ENCODE measurements at regions of chr16 and their contacts with region 1.

Region 1: GRCh38 chr16:82699711-82700495 is 73.1 kb downstream of the CDH13 start:
- DNase-seq: no peak
- H3K4me3 ChIP-seq: peak overlapping the region; percentile 19
- H3K27ac ChIP-seq: peak overlapping the region; percentile 88
- H3K4me1 ChIP-seq: peaks cover 71% of the 10 kb centered on the region
- H3K27me3 ChIP-seq: no peaks in the 10 kb centered on the region
- CTCF ChIP-seq: no peak

Region 2: DNA sequence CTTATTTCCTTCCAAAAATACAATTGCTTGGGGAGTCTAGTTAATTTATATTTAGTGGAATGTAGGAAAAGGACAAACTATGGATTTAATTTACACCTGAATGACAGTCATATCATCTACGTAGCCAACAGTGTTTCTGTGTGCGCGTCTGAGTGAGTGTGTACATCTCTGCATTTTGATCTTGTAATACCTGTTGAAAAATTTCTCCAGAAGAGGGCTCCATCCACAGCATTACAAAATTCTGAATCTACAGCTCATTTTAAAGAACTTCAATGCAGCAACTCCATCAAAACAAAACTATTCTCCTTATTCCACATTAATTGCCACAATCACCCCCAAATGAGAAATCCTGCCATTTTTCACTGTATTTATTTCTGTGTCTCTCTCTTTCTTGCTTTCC is 69.2 kb before region 1 on chr16:
- intact Hi-C with region 1: loop called (anchors 5 kb)
- DNase-seq: no peak
- H3K4me3 ChIP-seq: peak overlapping the region; percentile 90
- H3K27ac ChIP-seq: peak overlapping the region; percentile 95
- H3K4me1 ChIP-seq: peaks cover 100% of the 10 kb centered on the region
- H3K27me3 ChIP-seq: peaks cover 3% of the 10 kb centered on the region
- CTCF ChIP-seq: peak; percentile 51

Region 3: DNA sequence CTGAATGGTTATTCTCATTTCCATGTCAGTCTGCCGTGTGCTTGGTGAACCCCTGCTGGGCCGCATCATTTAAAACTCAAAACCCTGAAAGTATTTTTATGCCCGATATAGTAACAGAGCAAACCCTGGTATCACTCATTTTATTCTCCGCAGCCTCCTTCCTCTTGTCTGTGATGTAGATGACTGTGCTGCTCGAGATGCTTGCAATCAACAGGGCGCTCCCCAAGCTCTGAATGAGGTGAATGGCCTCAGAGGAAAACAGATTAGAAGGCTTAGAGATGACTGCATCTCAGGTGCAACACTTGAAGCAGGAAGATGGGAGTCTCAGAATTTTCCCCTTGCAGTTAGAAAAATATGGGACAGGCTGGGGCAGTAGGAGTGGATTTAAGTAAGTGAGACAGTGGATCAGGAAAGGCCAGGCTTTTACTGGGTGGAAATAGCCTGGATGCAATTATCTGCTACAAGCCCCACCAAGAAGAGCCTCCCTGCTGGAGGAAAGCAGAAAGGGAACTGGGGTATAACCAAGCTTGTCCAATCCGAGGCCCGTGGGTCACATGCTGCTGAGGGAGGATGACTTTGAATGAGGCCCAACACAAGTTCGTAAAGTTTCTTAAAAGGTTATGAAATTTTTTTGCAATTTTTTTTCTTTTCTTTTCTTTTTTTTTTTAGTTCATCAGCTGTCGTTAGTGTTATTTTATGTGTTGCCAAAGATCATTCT is 93.8 kb after region 1 on chr16:
- intact Hi-C with region 1: no loop called
- DNase-seq: no peak
- H3K4me3 ChIP-seq: no peak overlapping the region
- H3K27ac ChIP-seq: no peak overlapping the region
- H3K4me1 ChIP-seq: peaks cover 8% of the 10 kb centered on the region
- H3K27me3 ChIP-seq: no peaks in the 10 kb centered on the region
- CTCF ChIP-seq: no peak

Measured in left ventricle myocardium inferior (tissue), 1 donor.